ENCODE measurements at regions of chr4 and their contacts with region 1.

Region 1: GRCh38 chr4:15396157-15396800 is 31.6 kb upstream of the C1QTNF7 start:
- DNase-seq: peak; percentile 56
- CTCF ChIP-seq: peak; percentile 63

Region 2: DNA sequence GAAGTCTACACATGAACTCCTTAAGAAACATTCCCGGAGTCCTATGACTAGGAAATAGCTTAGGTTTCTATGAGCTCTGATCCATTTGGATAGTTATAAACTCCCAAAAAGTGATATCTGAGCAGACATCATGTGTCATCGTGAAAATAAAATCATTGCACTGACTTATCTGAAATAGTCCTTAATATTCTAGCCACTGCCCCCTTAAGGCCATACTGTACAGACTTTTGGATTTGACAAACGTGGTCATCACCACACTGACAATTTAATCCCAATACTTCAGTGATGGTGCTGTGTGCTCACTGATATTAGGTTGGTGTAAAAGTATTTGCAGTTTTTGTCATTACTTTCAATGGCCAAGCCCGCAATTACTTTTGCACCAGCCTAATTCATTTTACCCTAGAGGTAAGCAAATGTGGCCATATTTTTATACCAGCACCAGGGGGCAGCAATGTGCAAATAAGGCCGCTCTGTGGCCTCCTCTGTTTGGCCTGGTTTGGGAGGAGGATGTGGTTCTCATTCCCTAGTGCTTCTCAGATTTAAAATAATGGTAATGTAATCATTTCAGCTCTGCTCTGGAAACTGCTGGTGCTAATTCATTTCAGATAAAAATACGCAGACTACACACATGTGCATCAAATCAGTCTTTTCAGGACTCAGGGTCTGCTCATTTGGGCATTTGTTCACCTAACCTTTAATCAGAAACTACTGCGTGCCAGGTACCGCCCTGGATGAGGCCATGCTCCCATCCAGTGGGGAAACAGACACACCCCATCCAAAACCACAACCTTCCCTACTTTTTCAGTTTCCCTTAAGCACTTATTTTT is 164.8 kb before region 1 on chr4:
- CTCF ChIA-PET with region 1: interaction called, 44 read pairs
- POLR2A ChIA-PET with region 1: no interaction called
- DNase-seq: peak; percentile 61
- CTCF ChIP-seq: peak; percentile 69

Region 3: GRCh38 chr4:15238720-15239119 is 157.6 kb before region 1 on chr4:
- CTCF ChIA-PET with region 1: interaction called, 44 read pairs
- POLR2A ChIA-PET with region 1: no interaction called
- DNase-seq: peak; percentile 64
- CTCF ChIP-seq: peak; percentile 58

Region 4: GRCh38 chr4:15253201-15253748 is 143.0 kb before region 1 on chr4:
- CTCF ChIA-PET with region 1: interaction called, 17 read pairs
- POLR2A ChIA-PET with region 1: no interaction called
- DNase-seq: peak; percentile 56
- CTCF ChIP-seq: no peak

Region 5: DNA sequence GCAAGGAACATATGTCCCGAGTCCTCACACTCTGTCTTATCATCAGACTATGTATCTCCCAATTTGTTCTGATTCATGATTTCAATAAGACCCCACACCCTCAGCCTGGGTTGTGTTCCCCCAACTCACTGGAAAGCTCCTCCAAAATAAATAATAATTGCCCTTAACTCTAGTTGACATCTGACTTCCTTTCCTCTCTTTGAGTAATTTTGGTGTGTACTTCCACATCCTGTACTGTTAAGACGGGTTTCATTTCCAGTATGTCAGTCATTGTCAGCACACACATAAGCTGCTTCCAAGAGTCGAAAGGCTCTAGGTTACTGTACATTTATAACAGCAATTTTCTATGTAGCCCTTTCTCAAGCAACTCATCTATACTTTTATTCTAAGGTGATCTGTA is 20.6 kb before region 1 on chr4:
- CTCF ChIA-PET with region 1: interaction called, 31 read pairs
- POLR2A ChIA-PET with region 1: no interaction called
- DNase-seq: no peak
- CTCF ChIP-seq: no peak

Region 6: GRCh38 chr4:15385928-15386327 is 10.4 kb before region 1 on chr4:
- CTCF ChIA-PET with region 1: interaction called, 31 read pairs
- POLR2A ChIA-PET with region 1: no interaction called
- DNase-seq: no peak
- CTCF ChIP-seq: no peak

Measured in GM10248 (cell line).